GM18951 (cell line): ENCODE measurements at regions of chr17 and their contacts with region 1.

Region 1: GRCh38 chr17:69235338-69235930 is 6.8 kb upstream of the ABCA10 start:
- POLR2A ChIP-seq: no peak

Region 2: DNA sequence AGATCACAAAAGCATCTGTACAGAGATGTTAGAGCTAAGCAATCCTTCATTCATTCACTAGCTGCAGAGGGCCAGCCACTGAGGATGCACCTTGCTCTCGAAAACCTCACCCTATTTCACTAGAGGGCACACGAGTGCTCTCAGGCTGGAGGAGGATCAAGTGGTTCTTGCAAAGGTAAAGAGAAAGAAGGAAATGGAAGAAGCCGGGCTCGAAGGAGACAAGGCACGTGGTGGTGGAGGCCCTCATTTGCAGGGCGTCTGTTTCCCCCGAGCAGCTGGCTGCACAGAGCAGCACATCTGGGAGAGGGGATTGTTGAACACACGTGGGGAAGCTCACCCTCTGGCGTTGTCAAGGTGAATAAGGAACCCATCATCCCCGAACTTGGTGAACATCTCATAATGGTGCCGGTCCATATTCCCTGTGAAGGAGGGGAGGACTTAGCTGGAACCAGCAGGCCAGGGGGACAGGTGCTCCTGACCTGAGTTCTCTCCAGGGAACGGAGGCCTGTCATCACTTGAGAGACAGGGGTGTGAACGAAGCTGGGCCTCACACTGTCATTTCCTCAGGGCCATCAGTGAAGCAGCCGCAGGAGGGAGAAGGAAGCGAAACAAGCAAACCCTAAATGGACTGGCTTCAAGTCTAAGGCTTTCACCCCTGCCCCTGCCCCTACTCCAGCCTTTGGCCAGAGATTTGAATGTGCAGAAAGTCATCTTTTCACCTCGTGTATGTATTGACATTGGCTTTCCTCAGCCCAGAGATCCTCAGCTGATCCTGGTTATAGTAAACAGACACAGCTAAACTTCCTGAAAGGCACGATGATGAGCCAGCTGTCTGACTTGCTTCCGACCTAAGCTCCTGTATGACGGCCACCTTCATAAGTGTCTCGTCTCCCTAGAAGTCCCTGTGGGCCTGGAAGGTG is 695.6 kb before region 1 on chr17:
- in situ Hi-C with region 1: loop called (anchors 25 kb)
- POLR2A ChIP-seq: no peak

Region 3: GRCh38 chr17:68777243-68777855 is 458.1 kb before region 1 on chr17:
- in situ Hi-C with region 1: loop called (anchors 5 kb)
- POLR2A ChIP-seq: no peak

Region 4: DNA sequence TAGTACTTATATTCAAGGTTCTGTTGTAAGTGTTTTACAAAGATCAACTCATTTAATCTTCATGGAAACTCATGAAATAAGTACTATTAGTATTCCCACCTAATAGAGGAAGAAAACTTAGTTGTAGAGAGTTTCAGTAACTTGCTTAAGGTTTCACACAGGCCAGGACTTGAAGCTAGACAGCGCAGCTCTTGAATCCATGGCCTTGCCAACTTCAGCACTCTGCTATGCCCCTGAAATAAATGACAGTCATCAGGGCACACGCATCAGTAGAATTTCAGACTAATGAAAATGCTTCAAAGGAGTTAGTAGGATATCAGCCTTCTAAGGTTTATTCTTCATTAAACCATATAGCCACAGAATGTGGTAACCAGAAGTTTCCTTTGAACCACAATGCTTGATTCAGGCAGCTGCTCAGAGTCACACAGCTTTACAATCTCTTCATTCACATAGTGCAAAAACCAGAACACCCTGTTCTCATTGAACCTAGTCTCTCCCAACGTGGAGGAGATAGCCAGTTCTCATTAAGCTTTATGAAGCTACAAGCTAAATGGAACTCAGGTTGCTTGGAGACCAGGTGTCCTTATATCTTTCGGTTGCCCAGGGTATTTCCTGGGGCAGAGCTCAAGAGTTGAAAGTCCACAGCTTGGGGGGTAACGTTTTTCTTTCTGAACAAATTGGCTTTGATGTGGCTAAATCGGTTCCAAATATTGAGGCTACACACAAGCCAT is 973.6 kb after region 1 on chr17:
- in situ Hi-C with region 1: no loop called
- POLR2A ChIP-seq: no peak